MCF 10A (cell line): ENCODE measurements at regions of chr6 and their contacts with region 1.

Region 1: DNA sequence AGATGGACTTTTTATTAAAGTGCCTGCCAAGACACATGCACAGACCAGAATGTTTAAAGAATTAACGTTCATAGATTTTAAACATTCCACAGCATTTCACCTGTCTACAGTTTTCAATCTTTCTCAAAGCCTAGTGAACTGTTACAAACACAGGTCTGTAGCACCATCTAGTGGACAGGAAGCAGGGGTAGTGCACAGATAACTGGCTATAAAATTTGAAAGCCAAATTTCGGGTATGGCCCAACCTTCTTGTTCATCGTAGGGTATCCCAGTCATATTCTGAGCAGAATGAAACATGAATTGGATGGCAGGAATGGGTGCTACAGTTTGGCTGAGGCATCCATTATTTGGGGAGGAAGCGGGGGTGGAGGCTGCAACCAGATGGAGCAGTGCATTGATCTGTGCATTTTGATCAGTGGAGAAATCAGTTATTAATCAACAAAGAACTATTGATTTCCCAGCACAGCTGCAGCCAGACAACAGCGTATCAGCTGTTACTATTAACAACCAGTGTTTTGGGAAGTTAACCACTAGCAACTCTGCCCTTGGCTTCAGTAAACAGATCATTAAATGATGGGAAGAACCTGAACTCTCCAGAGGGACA is 56.1 kb upstream of the B3GAT2 start:
- DNase-seq: peak; percentile 73
- H3K4me3 Mint-ChIP-seq: no peak overlapping the region
- H3K27ac Mint-ChIP-seq: no peak overlapping the region
- H3K4me1 Mint-ChIP-seq: no peaks in the 10 kb centered on the region
- H3K27me3 Mint-ChIP-seq: peaks cover 56% of the 10 kb centered on the region
- CTCF ChIP-seq: peak; percentile 82

Region 2: GRCh38 chr6:70304616-70305015 is 708.4 kb before region 1 on chr6:
- CTCF ChIA-PET with region 1: interaction called, 51 read pairs
- POLR2A ChIA-PET with region 1: no interaction called
- intact Hi-C with region 1: no loop called
- DNase-seq: no peak
- H3K4me3 Mint-ChIP-seq: no peak overlapping the region
- H3K27ac Mint-ChIP-seq: no peak overlapping the region
- H3K4me1 Mint-ChIP-seq: no peaks in the 10 kb centered on the region
- H3K27me3 Mint-ChIP-seq: peaks cover 92% of the 10 kb centered on the region
- CTCF ChIP-seq: no peak

Region 3: GRCh38 chr6:70520575-70520974 is 492.4 kb before region 1 on chr6:
- CTCF ChIA-PET with region 1: no interaction called
- POLR2A ChIA-PET with region 1: no interaction called
- intact Hi-C with region 1: loop called (anchors 2 kb)
- DNase-seq: peak; percentile 13
- H3K4me3 Mint-ChIP-seq: no peak overlapping the region
- H3K27ac Mint-ChIP-seq: no peak overlapping the region
- H3K4me1 Mint-ChIP-seq: no peaks in the 10 kb centered on the region
- H3K27me3 Mint-ChIP-seq: no peaks in the 10 kb centered on the region
- CTCF ChIP-seq: peak; percentile 46

Region 4: DNA sequence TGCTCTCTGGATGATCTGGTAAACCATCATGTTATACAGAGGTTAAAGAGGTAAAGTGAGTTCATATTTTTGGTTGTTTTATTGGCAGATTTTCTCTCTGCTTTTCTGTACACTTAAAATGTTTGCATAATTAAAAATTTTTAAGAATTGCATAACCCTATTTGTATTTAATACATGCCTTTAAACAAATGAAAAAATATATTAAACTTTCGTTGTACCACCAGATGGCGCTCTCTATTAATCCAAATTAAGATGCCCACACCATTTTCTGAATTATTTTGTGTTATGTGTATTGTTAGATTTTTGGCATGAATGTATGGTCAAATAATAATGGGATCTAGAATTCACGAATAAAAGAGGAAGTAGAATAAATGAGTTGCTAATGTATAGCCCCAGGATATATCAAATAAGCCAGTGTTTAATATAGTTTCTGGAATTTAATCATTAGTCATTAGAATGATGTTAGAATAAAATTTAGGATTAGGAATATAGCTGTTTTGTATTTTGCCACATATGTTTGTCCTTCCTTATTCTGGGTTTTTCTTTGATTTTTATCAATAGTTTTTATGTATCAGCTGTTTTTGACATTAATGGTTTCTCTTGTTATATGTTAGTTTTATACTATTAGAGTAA is 306.4 kb before region 1 on chr6:
- CTCF ChIA-PET with region 1: interaction called, 21 read pairs
- POLR2A ChIA-PET with region 1: no interaction called
- intact Hi-C with region 1: loop called (anchors 2 kb)
- DNase-seq: peak; percentile 61
- H3K4me3 Mint-ChIP-seq: no peak overlapping the region
- H3K27ac Mint-ChIP-seq: no peak overlapping the region
- H3K4me1 Mint-ChIP-seq: peaks cover 6% of the 10 kb centered on the region
- H3K27me3 Mint-ChIP-seq: no peaks in the 10 kb centered on the region
- CTCF ChIP-seq: peak; percentile 36

Region 5: GRCh38 chr6:70996106-70996505 is 16.9 kb before region 1 on chr6:
- CTCF ChIA-PET with region 1: interaction called, 12 read pairs
- POLR2A ChIA-PET with region 1: no interaction called
- intact Hi-C with region 1: no loop called
- DNase-seq: no peak
- H3K4me3 Mint-ChIP-seq: no peak overlapping the region
- H3K27ac Mint-ChIP-seq: no peak overlapping the region
- H3K4me1 Mint-ChIP-seq: no peaks in the 10 kb centered on the region
- H3K27me3 Mint-ChIP-seq: peaks cover 26% of the 10 kb centered on the region
- CTCF ChIP-seq: no peak